ENCODE measurements at regions of chr16 and their contacts with region 1.

Region 1: DNA sequence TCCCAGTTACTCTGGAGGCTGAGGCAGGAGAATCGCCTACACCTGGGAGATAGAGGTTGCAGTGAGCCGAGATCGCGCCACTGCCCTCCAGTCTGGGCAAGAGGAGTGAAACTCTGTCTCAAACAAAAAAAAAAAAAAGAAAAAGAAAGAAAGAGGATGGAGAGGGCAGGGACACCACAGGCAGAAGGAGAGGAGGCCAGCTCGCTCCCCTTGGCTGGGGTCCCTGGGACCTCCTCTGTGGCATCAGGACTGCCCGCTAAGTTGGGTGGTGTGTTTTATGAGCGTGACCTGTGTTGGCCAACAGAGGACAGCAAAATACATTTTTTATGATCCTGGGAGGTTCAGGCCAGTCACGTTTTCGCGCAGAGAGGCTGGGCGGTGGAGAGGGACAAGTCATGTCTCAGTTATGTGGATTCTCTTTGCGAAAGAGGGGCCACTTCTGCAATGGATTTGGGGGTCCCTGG is 229.6 kb downstream of the MRTFB start:
- DNase-seq: peak; percentile 92
- H3K4me3 ChIP-seq: peak overlapping the region; percentile 43 to 100 (median 97)
- H3K27ac ChIP-seq: peak overlapping the region; percentile 85 to 92 (median 90)
- H3K4me1 ChIP-seq: peaks cover 0 to 37% (median 19%) of the 10 kb centered on the region in 4 donors
- H3K27me3 ChIP-seq: no peaks in the 10 kb centered on the region
- CTCF ChIP-seq: peak; percentile 50 to 76 (median 56)
- EP300 ChIP-seq: no peak
- POLR2A ChIP-seq: no peak

Region 2: GRCh38 chr16:14249291-14250032 is 51.3 kb before region 1 on chr16:
- intact Hi-C with region 1: loop called (anchors 2 kb)
- DNase-seq: no peak
- H3K4me3 ChIP-seq: no peak overlapping the region
- H3K27ac ChIP-seq: no peak overlapping the region
- H3K4me1 ChIP-seq: peaks cover 0 to 2% (median 0%) of the 10 kb centered on the region in 4 donors
- H3K27me3 ChIP-seq: no peaks in the 10 kb centered on the region
- CTCF ChIP-seq: peak; percentile 50 to 81 (median 67)
- EP300 ChIP-seq: no peak
- POLR2A ChIP-seq: no peak

Region 3: GRCh38 chr16:14399378-14400284 is 98.9 kb after region 1 on chr16:
- intact Hi-C with region 1: loop called (anchors 2 kb)
- DNase-seq: peak; percentile 79
- H3K4me3 ChIP-seq: no peak overlapping the region
- H3K27ac ChIP-seq: peak overlapping the region; percentile 42 to 85 (median 74)
- H3K4me1 ChIP-seq: peaks cover 0 to 28% (median 20%) of the 10 kb centered on the region in 4 donors
- H3K27me3 ChIP-seq: no peaks in the 10 kb centered on the region
- CTCF ChIP-seq: no peak
- EP300 ChIP-seq: peak in 1 of 4 donors; percentile 8
- POLR2A ChIP-seq: no peak

Region 4: GRCh38 chr16:14501331-14502255 is 200.9 kb after region 1 on chr16:
- intact Hi-C with region 1: loop called (anchors 2 kb)
- DNase-seq: peak; percentile 97
- H3K4me3 ChIP-seq: no peak overlapping the region
- H3K27ac ChIP-seq: peak overlapping the region; percentile 68 to 83 (median 77)
- H3K4me1 ChIP-seq: peaks cover 0 to 49% (median 36%) of the 10 kb centered on the region in 4 donors
- H3K27me3 ChIP-seq: no peaks in the 10 kb centered on the region
- CTCF ChIP-seq: no peak
- EP300 ChIP-seq: peak in 2 of 4 donors; percentile 29 to 62
- POLR2A ChIP-seq: no peak

Measured in sigmoid colon (tissue), 7 donors.